GM10248 (cell line): ENCODE measurements at regions of chr16 and their contacts with region 1.

Region 1: DNA sequence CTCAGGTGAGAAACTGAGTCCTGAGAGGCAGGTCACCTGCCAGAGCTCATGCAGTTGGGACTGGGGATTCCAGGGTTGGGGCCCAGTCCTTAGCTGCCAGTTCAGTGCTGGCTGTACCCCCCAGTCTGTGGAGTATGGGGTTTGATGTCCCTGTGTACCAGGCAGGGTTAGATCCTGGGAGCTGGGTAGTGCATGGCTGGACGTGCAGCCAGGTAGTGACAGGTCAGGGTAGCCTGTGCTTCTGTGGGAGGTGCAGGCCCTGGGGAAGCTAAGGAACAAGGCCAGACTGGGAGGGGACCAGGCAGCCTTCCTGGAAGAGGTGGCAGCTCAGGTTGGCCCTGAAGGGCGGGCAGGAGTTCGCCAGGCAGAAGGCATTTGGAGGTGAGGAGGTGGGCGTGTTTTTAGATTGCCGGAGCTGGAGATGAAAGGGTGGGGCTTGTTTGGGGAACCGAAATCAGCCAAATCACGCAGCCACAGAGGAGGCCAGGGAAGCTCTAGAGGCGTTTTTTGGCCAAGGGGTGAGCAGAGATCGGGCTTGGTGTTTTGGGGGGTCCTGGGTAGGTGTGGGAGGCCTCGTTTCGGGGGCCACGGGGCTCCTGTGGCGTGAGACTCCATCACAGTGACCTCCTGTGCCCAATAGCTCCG is 7.5 kb downstream of the ADCY7 start:
- DNase-seq: peak; percentile 88
- CTCF ChIP-seq: no peak

Region 2: GRCh38 chr16:50251375-50252081 is 22.3 kb before region 1 on chr16:
- CTCF ChIA-PET with region 1: interaction called, 11 read pairs
- POLR2A ChIA-PET with region 1: no interaction called
- DNase-seq: no peak
- CTCF ChIP-seq: no peak

Region 3: DNA sequence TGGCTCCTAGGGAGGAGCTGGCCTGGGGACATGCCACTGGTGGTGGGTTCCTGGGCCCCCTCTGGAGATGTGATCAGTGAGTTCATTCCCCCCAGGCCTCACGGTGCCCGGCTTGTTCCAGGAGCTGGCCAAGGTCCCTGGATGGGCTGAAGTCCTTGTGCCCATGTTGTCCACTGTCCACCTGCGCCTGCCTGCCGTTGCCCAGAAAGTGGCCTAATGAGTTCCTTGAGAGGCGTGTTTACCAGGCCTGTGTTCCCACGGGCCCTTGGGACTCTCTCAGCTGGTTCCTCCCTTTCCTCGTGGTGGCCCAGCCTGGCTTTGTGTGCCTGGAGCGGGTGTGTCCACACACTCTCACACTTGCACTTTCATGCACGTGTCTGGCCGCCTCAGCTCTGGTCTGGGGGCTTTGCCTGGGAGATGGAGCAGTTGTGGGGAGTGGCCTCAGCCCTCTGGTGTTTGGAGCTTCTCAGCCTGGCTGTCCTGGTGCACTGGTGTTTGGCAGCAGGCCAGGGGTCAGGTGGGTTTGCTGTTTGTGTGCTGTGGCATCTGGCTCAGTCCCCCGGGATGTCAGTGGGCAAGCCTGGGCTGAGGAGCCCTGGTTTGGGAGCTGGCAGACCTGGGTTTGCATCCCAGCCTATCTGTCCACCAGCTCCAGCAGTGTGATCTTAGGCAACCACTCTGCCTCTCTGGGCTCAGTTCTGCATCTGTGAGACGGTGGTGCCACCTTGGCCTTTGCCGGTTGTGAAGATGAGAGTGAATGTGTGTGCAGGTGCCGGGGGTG is 10.5 kb after region 1 on chr16:
- CTCF ChIA-PET with region 1: interaction called, 12 read pairs
- POLR2A ChIA-PET with region 1: interaction called, 3 read pairs
- DNase-seq: no peak
- CTCF ChIP-seq: no peak

Region 4: DNA sequence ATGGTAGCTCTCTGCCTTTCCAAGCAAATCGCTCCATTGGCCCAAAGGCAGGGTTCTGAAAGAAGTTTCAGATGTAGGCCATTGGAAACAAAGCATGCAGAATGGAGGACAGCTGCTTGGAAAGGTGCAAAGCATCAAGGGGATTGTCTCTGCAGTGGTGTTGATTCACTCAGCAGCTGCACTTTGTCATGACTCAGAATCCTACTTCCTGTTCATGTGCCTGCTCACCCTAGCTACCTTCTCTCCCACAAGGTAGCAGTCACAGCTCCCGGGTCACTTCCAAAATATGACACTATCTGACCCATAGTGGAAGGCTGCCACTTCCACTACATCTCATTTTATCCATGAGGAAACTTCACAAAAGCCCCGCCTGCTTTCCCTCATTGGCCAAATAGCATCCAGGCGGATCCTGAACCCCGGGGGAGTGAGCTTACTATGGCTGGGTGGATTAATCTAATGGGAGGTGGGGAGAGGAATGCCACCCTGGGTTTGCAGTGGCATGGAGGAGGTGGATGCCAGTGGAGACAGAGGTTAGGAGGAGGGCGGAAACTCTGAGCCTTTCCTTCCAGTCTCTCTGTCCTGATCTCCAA is 199.6 kb after region 1 on chr16:
- CTCF ChIA-PET with region 1: no interaction called
- POLR2A ChIA-PET with region 1: no interaction called
- DNase-seq: peak; percentile 45
- CTCF ChIP-seq: no peak

Region 5: GRCh38 chr16:50603206-50604064 is 329.6 kb after region 1 on chr16:
- CTCF ChIA-PET with region 1: no interaction called
- POLR2A ChIA-PET with region 1: no interaction called
- DNase-seq: no peak
- CTCF ChIP-seq: no peak